Activated CD4-positive, alpha-beta T cell treated with anti-CD3 and anti-CD28 coated beads, Interleukin-2, amount 10 ng/mL, durations not matched to agents 24 days and 14 days (primary cell): ENCODE measurements at regions of chr7 and their contacts with region 1.

Region 1: DNA sequence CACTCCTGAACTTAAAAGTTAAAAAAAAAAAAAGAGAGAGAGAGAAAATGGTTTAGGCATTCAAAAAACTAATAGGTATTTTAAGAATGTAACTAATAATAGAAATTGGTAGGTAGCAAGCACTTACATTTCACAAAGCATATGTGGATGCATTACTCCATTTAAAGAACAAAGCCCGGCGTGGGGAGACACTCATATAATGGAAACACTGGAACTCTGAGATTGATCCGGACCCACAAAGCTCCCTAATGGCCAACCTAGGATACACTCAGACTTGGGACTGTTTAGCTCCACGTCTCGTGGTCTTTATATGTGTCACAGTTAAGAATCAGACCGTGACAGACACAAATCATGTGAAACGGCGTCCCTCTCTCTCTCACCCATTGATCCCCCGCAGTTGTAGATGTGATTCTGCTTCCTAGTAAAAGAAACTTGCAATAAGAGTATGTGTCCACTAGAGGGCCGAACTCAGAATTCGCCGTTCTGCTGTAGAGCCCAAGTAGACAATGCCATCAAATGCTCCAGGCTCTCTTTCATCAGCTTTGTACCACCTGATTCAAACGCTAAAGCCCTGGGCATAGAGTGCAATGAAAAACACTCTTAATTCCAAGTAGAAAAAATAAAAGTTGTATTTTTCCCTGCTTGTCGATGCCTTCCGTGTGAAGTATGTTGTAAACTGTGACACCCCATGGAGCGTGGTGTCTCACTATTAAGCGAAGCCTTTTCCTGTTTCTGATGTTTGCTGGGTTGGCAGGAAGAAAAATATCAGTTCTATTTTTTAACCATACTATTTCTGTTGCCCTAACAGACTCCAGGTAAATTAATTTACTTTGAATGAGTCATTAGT is 429.0 kb upstream of the MTPN start:
- DNase-seq: peak; percentile 70
- H3K4me3 Mint-ChIP-seq: no peak overlapping the region
- H3K27ac Mint-ChIP-seq: no peak overlapping the region
- H3K4me1 Mint-ChIP-seq: peaks cover 2% of the 10 kb centered on the region
- H3K27me3 Mint-ChIP-seq: no peaks in the 10 kb centered on the region

Region 2: GRCh38 chr7:136312592-136312991 is 93.6 kb before region 1 on chr7:
- intact Hi-C with region 1: no loop called
- DNase-seq: no peak
- H3K4me3 Mint-ChIP-seq: no peak overlapping the region
- H3K27ac Mint-ChIP-seq: no peak overlapping the region
- H3K4me1 Mint-ChIP-seq: no peaks in the 10 kb centered on the region
- H3K27me3 Mint-ChIP-seq: no peaks in the 10 kb centered on the region

Region 3: DNA sequence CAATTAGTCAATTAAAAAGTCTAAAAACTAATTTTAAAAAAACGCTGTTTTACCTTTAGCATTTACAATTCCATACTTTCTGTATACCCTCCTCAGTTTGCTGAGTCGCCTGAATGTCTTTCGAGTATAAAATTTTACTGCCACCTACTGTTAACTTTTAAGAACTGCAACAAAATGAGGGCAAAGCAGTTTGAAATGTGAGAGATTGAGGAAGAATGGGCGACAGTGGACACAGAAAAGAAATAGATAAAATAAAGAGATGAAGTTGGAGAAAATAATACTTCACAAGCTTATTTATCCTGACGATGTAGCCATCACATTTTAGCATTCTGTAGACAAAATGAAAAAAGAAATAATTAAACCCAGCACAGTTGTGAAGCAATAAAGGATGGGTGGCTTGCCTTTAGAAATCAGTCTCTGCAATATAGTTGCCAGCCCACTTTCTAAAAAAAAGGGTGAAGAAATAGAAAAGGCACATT is 1048.1 kb after region 1 on chr7:
- intact Hi-C with region 1: loop called (anchors 10 kb)
- DNase-seq: no peak
- H3K4me3 Mint-ChIP-seq: no peak overlapping the region
- H3K27ac Mint-ChIP-seq: no peak overlapping the region
- H3K4me1 Mint-ChIP-seq: no peaks in the 10 kb centered on the region
- H3K27me3 Mint-ChIP-seq: no peaks in the 10 kb centered on the region